ENCODE measurements at regions of chr4 and their contacts with region 1.

Region 1: DNA sequence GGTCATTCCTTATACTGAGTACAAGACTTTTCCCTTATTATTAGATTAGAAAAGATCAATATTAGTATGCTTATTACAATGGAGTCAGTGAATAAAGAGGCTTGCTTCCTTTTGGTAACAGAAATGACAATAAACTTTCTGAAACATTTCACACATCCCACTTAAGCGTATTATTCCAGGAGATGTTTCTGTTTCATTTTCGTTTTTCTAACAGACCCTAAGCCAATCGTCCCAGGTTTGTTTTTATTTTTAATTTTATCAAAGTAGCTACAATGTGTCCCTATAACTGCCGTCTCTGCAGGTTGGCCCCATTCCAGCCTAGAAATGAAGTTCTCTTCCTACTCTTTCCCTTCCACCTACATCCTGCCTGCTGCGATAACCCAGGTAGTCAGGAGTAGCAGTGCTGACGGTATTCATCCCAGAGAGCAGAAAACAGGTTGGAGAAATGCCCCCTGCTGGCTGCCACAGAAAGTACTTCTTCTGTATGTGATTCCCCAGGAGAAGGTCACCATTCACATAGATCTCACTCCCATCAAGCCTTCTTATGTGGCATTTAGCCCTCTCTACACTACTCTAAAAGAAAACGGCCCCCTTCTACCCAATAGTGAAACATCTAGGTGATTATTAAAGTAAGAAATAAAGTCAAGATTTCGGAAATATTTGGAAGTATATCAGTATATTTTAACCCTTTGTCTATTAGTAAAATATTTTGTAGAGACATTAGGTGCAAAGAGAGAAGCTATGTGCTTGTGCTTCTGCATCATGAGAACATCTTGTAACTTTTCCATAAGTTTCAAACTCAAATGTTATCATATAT is 40.4 kb downstream of the ENPEP start:
- DNase-seq: peak in 4 of 5 donors; percentile 45 to 64 (median 56)
- ATAC-seq: peak in 3 of 4 donors; percentile 81 to 89 (median 87)
- H3K4me3 ChIP-seq: peak overlapping the region in 10 of 12 donors; percentile 35 to 62 (median 53)
- H3K27ac ChIP-seq: peak overlapping the region in 2 of 12 donors; percentile 2 to 10
- H3K4me1 ChIP-seq: peaks cover 0 to 17% (median 0%) of the 10 kb centered on the region in 12 donors
- H3K27me3 ChIP-seq: no peaks in the 10 kb centered on the region
- CTCF ChIP-seq: peak; percentile 57 to 81 (median 74)
- POLR2A ChIP-seq: no peak

Region 2: DNA sequence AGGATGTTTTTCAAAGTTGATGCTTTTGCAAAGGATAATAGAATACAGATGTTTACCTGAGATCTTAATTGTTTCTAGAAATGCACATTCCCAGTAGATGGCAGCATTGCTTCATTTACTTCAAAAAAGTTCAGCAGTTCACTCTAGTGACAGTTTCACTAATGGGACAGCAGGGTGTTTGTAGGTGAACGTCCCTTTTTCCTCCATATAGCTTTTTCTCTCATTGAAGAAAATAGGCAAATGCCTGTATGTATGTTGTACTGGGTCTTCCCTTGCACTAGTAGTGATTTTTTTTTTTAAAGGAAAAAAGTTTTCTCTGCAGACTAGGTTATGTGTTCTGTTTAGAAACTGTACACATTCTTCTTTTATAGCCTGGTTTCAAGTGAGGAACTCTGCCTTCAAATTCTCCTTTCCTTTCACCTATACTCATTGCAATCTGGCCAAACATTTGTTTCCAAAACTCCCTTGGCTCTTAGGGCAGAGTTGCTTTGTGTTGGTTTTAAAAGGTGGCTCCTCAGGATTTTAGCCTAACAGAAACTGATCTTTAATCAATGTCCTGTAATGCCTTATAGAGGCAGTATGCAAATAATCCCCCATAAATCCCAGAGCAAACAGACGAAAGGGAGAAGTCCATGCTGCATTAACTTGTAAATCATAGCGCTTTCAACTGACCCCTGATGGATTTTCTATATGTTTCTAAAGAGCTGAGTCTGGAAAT is 517.3 kb before region 1 on chr4:
- intact Hi-C with region 1: loop called in 9 of 10 experiments (anchors 2 to 5 kb)
- DNase-seq: peak in 1 of 5 donors; percentile 18
- ATAC-seq: peak in 3 of 4 donors; percentile 32 to 62 (median 36)
- H3K4me3 ChIP-seq: no peak overlapping the region
- H3K27ac ChIP-seq: no peak overlapping the region
- H3K4me1 ChIP-seq: peaks cover 0 to 8% (median 0%) of the 10 kb centered on the region in 12 donors
- H3K27me3 ChIP-seq: peaks cover 0 to 10% (median 0%) of the 10 kb centered on the region in 9 donors
- CTCF ChIP-seq: peak; percentile 50 to 73 (median 64)
- POLR2A ChIP-seq: no peak

Region 3: GRCh38 chr4:110005461-110006056 is 510.8 kb before region 1 on chr4:
- intact Hi-C with region 1: loop called in 7 of 10 experiments (anchors 1 to 5 kb)
- DNase-seq: no peak
- ATAC-seq: peak in 1 of 4 donors; percentile 61
- H3K4me3 ChIP-seq: no peak overlapping the region
- H3K27ac ChIP-seq: no peak overlapping the region
- H3K4me1 ChIP-seq: peaks cover 0 to 6% (median 0%) of the 10 kb centered on the region in 12 donors
- H3K27me3 ChIP-seq: peaks cover 0 to 5% (median 0%) of the 10 kb centered on the region in 9 donors
- CTCF ChIP-seq: peak; percentile 45 to 77 (median 62)
- POLR2A ChIP-seq: no peak

Region 4: GRCh38 chr4:110193822-110194761 is 322.2 kb before region 1 on chr4:
- intact Hi-C with region 1: loop called in 3 of 10 experiments (anchors 10 kb)
- DNase-seq: peak in 4 of 5 donors; percentile 44 to 61 (median 50)
- ATAC-seq: peak in 3 of 4 donors; percentile 14 to 42 (median 29)
- H3K4me3 ChIP-seq: no peak overlapping the region
- H3K27ac ChIP-seq: no peak overlapping the region
- H3K4me1 ChIP-seq: peaks cover 0 to 26% (median 4%) of the 10 kb centered on the region in 12 donors
- H3K27me3 ChIP-seq: no peaks in the 10 kb centered on the region
- CTCF ChIP-seq: no peak
- POLR2A ChIP-seq: no peak

Region 5: GRCh38 chr4:110310795-110311194 is 205.5 kb before region 1 on chr4:
- intact Hi-C with region 1: loop called in 8 of 10 experiments (anchors 2 to 10 kb)
- DNase-seq: no peak
- ATAC-seq: no peak
- H3K4me3 ChIP-seq: no peak overlapping the region
- H3K27ac ChIP-seq: no peak overlapping the region
- H3K4me1 ChIP-seq: peaks cover 0 to 10% (median 0%) of the 10 kb centered on the region in 12 donors
- H3K27me3 ChIP-seq: no peaks in the 10 kb centered on the region
- CTCF ChIP-seq: no peak
- POLR2A ChIP-seq: no peak

Region 6: GRCh38 chr4:110344162-110344561 is 172.2 kb before region 1 on chr4:
- intact Hi-C with region 1: loop called in 8 of 10 experiments (anchors 2 to 10 kb)
- DNase-seq: no peak
- ATAC-seq: no peak
- H3K4me3 ChIP-seq: no peak overlapping the region
- H3K27ac ChIP-seq: no peak overlapping the region
- H3K4me1 ChIP-seq: no peaks in the 10 kb centered on the region
- H3K27me3 ChIP-seq: no peaks in the 10 kb centered on the region
- CTCF ChIP-seq: peak in 7 of 12 donors; percentile 12 to 36 (median 24)
- POLR2A ChIP-seq: no peak

Region 7: DNA sequence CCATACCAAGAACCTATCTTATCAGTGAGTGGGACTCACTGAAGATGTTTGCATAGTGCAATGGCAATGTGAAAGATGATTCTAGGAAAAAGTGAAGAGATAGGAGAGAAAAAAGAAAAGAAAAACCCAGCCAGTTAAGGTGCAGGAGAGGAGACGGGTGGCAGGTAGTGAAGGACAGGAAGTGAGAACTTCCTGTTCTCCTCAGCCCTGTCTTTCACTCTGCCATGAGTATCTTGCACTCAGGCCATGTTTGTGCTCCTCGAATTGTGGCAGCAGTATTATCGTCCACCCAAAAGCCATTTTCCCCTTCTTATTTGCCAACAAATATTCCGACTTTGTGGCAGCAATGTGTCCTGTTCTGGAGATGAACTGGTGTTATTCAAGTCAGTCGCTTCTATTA is 48.9 kb before region 1 on chr4:
- intact Hi-C with region 1: no loop called
- DNase-seq: no peak
- ATAC-seq: no peak
- H3K4me3 ChIP-seq: no peak overlapping the region
- H3K27ac ChIP-seq: no peak overlapping the region
- H3K4me1 ChIP-seq: no peaks in the 10 kb centered on the region
- H3K27me3 ChIP-seq: no peaks in the 10 kb centered on the region
- CTCF ChIP-seq: no peak
- POLR2A ChIP-seq: no peak

Region 8: DNA sequence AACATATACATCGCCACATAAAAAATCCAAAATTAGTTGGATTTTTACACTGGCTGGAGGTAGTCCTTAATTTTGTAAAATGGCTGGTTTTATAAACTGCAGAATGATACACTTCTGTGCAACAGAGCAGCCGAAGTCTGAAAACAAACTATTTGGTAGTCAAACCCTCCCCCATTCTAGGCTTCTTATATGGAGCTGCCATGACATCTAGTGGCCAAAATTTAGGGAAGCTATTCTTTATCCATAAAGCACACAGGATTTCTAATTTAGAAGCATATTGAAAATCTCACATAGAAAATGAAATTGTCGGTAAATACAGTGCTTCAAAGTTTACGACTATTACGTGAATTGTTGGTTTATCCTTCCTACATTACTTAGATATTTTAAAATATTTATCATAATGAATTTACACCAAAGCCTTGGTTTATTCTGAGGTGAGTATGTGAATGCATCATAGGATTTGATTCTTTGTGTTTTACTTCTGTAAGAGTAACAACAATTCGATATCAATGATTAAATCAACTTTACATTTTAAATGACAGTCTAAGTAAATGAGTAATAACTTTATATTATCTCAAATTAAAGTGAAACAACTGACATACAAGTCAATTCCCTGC is 1515.5 kb after region 1 on chr4:
- intact Hi-C with region 1: loop called in 2 of 10 experiments (anchors 10 kb)
- DNase-seq: no peak
- ATAC-seq: no peak
- H3K4me3 ChIP-seq: no peak overlapping the region
- H3K27ac ChIP-seq: no peak overlapping the region
- H3K4me1 ChIP-seq: no peaks in the 10 kb centered on the region
- H3K27me3 ChIP-seq: peaks cover 0 to 50% (median 2%) of the 10 kb centered on the region in 9 donors
- CTCF ChIP-seq: peak; percentile 26 to 66 (median 48)
- POLR2A ChIP-seq: no peak